Endothelial cell of umbilical vein (primary cell): ENCODE measurements at regions of chr15 and their contacts with region 1.

Region 1: DNA sequence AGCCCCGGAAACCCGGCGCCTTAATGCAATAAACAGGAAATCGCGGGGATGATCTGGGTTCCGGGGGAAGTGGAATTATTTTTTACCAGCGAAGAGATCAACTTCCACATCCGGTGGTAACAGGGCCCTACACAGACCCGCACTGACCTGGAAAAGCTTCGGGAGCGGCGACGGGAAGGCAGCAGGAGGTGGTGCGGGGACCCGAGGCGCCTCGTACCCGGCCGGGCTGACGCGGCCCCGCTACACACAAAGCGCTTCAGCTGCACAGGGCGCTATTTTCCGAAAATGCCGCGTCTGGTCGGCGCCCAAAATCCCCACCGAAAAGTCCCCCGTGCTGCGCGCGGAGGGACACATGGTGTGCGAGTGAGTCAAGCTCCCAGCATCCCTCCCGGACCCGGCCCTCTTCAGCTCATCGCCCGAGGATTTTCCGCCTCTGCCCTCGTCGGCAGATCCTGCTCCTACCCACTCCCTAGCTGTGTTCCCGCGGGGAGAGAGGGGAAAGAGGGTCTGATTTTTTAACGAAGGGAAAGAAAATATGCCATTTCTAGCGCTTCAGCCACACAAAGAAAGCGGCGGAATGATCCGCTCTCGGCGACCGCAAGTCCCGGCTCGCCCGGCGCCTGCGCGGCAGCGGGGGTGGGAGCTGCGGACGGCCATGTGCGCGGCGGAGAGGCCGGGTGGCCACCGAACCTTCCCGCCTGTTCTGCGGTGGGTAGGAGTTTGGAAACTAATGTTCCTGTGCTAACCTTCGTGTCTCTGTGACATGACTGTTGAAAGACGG is at the start of gene GABPB1:
- DNase-seq: peak; percentile 93
- H3K4me3 ChIP-seq: peak within 1 kb of the TSS; percentile 69 to 97 (median 79)
- H3K27ac ChIP-seq: peak within 1 kb of the TSS; percentile 98
- H3K4me1 ChIP-seq: peaks cover 36% of the 10 kb centered on the region
- H3K27me3 ChIP-seq: no peaks in the 10 kb centered on the region
- CTCF ChIP-seq: no peak
- POLR2A ChIP-seq: peak; percentile 48
- total RNA-seq, gene GABPB1: 57.8 and 59.7 TPM in 2 replicates

Region 2: GRCh38 chr15:50315814-50316630 is 39.0 kb before region 1 on chr15:
- CTCF ChIA-PET with region 1: interaction called, 15 read pairs
- POLR2A ChIA-PET with region 1: no interaction called
- dilution Hi-C with region 1: no loop called
- intact Hi-C with region 1: no loop called
- DNase-seq: peak; percentile 52
- H3K4me3 ChIP-seq: no peak overlapping the region
- H3K27ac ChIP-seq: no peak overlapping the region
- H3K4me1 ChIP-seq: no peaks in the 10 kb centered on the region
- H3K27me3 ChIP-seq: no peaks in the 10 kb centered on the region
- CTCF ChIP-seq: peak; percentile 32 to 39
- POLR2A ChIP-seq: no peak

Region 3: GRCh38 chr15:50424066-50424890 is 69.2 kb after region 1 on chr15 and contains the start of gene USP8:
- CTCF ChIA-PET with region 1: no interaction called
- POLR2A ChIA-PET with region 1: interaction called, 5 read pairs
- dilution Hi-C with region 1: no loop called
- intact Hi-C with region 1: loop called (anchors 1 kb)
- DNase-seq: peak; percentile 96
- H3K4me3 ChIP-seq: peak within 1 kb of the TSS; percentile 41 to 96 (median 86)
- H3K27ac ChIP-seq: peak within 1 kb of the TSS; percentile 58
- H3K4me1 ChIP-seq: peaks cover 8% of the 10 kb centered on the region
- H3K27me3 ChIP-seq: no peaks in the 10 kb centered on the region
- CTCF ChIP-seq: no peak
- POLR2A ChIP-seq: peak; percentile 96
- total RNA-seq, gene USP8: 44.8 and 47.0 TPM in 2 replicates

Region 4: DNA sequence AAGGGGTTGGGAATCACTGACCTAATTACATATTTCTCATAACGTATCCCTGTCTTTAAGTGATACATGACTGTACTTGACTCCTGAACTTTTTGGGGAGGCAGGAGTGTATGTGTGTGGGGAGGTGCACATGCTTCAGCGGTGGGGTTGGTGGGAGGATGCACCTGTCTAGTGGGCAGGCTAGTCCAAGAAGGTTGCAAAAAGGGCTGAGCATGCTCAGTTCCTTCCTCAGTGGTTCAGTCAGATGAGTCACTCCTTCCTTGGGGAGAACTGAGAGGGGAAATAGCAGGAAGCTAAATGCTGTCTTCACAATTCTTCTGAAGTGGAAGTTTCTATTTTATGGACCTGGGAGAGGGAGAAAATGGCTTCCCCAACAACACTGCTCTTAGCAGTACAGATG is 528.9 kb after region 1 on chr15:
- CTCF ChIA-PET with region 1: interaction called, 3 read pairs
- POLR2A ChIA-PET with region 1: no interaction called
- dilution Hi-C with region 1: no loop called
- intact Hi-C with region 1: loop called (anchors 5 kb)
- DNase-seq: peak; percentile 71
- H3K4me3 ChIP-seq: no peak overlapping the region
- H3K27ac ChIP-seq: peak overlapping the region; percentile 68
- H3K4me1 ChIP-seq: peaks cover 23% of the 10 kb centered on the region
- H3K27me3 ChIP-seq: no peaks in the 10 kb centered on the region
- CTCF ChIP-seq: no peak
- POLR2A ChIP-seq: no peak

Region 5: DNA sequence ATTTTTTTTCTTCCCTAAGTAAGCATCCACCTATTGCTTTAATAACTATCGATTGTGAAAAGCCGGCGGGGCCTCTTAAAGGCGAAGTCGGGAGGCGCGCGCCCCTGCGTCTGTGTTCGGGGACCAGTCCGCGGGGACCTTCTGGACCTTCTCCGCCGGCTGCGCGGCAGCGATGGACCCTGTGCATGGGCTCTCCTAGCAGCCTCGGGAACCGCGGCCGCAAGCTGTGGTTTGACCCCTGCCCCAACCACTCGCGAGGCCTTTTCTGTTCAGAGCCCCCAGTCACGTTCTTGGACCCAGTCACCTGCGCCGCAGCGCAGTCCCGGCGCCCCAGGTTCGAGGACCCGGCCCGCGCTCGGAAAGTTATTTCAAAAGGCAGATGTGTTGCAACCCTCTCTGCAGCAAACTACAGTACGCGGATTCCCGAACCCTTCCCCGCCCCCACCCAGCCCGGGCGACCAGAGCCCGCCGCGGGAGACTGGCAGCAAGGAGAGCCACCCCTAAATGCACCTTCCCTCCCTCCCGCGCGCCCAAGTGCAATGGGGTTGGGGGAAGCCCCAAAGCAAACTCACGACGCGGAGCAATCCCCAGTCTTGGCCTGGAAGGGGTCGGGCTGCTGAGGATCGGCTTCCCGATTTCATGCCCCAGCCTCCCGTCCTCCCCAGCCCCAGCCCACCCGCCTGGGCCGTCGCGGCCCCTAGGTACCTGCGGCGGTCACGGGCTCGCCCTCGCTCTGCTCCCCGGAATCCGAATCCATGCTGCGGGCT is 739.0 kb after region 1 on chr15:
- CTCF ChIA-PET with region 1: no interaction called
- POLR2A ChIA-PET with region 1: no interaction called
- dilution Hi-C with region 1: no loop called
- intact Hi-C with region 1: loop called (anchors 10 kb)
- DNase-seq: peak; percentile 59
- H3K4me3 ChIP-seq: peak overlapping the region; percentile 75 to 95 (median 91)
- H3K27ac ChIP-seq: peak overlapping the region; percentile 61
- H3K4me1 ChIP-seq: peaks cover 78% of the 10 kb centered on the region
- H3K27me3 ChIP-seq: no peaks in the 10 kb centered on the region
- CTCF ChIP-seq: no peak
- POLR2A ChIP-seq: peak; percentile 38